ENCODE measurements at regions of chr1 and their contacts with region 1.

Region 1: GRCh38 chr1:60350531-60350930 is 277.0 kb upstream of the C1orf87 start:
- DNase-seq: no peak

Region 2: GRCh38 chr1:61221642-61222041 is 871.1 kb after region 1 on chr1:
- intact Hi-C with region 1: loop called in 1 of 2 experiments (anchors 5 kb)
- DNase-seq: no peak